ENCODE measurements at regions of chr14 and their contacts with region 1.

Region 1: GRCh38 chr14:23320774-23321571 is at the start of gene PABPN1:
- DNase-seq: peak; percentile 99 to 100
- H3K4me3 ChIP-seq: peak within 1 kb of the TSS; percentile 81 to 99
- H3K27ac ChIP-seq: peak within 1 kb of the TSS; percentile 89 to 100
- H3K4me1 ChIP-seq: peaks cover 0 to 25% (median 15%) of the 10 kb centered on the region in 4 donors
- H3K27me3 ChIP-seq: no peaks in the 10 kb centered on the region
- CTCF ChIP-seq: peak in 1 of 2 experiments; percentile 20

Region 2: DNA sequence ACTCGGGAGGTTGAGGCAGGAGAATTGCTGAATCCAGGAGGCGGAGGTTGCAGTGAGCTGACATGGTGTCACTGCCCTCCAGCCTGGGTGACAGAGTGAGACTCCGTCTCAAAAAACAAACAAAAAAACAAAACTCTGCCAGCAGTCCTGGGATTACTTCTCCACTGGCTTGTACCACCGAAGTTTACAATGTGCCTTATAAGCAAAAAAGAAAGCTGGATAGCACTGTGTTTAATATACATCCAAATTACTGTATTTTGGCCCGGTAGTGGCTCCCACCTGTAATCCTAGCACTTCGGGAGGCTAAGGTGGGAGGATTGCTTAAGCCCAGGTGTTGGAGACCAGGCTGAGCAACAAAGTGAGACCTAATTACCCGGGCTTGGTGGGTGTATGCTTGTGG is 51.8 kb before region 1 on chr14:
- intact Hi-C with region 1: loop called (anchors 10 kb)
- DNase-seq: no peak
- H3K4me3 ChIP-seq: no peak overlapping the region
- H3K27ac ChIP-seq: no peak overlapping the region
- H3K4me1 ChIP-seq: no peaks in the 10 kb centered on the region
- H3K27me3 ChIP-seq: no peaks in the 10 kb centered on the region
- CTCF ChIP-seq: no peak

Region 3: DNA sequence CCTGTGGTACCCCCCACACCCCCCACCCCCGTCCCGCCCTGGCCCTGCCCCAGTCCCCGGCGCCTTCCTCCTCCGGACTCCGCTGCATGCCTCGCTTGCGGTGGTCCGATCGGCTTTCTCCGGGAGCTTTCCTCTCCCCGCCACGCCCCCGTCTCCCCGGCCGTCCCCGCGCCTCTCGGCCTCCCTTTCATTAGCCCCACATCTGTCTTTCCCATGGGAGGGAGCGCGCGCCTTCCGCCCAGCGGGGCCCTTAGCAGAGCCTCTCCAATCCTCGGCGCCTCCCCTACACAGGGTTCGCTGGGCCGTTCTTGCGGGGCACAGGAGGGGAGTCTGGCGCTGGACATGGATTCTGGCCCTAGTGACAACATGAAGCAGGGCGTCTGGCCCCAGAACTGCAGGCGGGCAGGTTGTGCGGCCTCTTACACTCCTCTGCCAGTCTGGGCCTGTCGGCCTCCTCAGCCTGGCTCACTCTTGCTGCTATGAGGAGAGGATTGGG is 45.5 kb after region 1 on chr14:
- intact Hi-C with region 1: loop called (anchors 5 kb)
- DNase-seq: peak; percentile 76 to 92
- H3K4me3 ChIP-seq: peak overlapping the region; percentile 70 to 71
- H3K27ac ChIP-seq: peak overlapping the region; percentile 98 to 100
- H3K4me1 ChIP-seq: peaks cover 0 to 48% (median 21%) of the 10 kb centered on the region in 4 donors
- H3K27me3 ChIP-seq: no peaks in the 10 kb centered on the region
- CTCF ChIP-seq: no peak

Region 4: DNA sequence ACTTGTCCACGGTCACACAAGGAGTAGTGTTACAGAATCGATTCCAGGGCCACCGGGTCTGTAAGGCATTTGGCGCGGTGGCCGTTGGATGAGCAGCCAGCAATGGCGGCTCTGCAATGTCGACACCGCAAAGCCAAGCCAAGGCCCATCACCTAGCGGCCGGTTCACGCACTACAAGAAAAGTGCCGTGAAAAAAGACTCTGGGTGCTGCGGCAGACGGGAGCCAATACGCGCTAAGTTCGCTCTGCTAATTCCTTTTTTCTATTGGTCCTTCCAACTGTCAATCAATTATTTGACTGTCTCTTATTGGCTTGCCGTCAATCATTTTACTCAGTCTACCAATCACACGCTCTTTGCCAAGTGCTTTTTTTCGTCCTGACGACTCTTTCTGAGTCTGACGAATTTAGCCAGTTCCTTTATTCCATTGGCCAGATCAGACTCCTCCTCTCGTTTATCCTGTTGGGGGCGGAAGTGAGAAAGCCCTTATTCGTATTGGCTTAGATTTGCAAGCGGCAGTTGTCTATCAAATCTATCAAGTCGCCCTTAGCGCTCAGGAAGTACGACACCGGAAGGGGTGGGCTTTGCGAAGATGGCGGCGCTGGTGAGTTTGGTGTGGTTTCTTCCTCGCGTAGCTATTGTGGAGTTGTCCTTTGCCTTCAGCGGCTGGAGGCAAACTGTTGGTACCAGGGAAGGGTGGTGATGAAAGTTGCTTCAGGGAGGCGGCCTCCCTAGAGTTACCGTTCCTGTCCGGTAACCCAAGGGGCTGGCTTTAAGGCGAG is 148.3 kb after region 1 on chr14 and contains the start of gene NGDN:
- intact Hi-C with region 1: loop called (anchors 10 kb)
- DNase-seq: peak; percentile 96
- H3K4me3 ChIP-seq: peak within 1 kb of the TSS; percentile 76 to 79
- H3K27ac ChIP-seq: peak within 1 kb of the TSS; percentile 76 to 83
- H3K4me1 ChIP-seq: peaks cover 0 to 8% (median 4%) of the 10 kb centered on the region in 4 donors
- H3K27me3 ChIP-seq: no peaks in the 10 kb centered on the region
- CTCF ChIP-seq: peak; percentile 72 to 87

Region 5: DNA sequence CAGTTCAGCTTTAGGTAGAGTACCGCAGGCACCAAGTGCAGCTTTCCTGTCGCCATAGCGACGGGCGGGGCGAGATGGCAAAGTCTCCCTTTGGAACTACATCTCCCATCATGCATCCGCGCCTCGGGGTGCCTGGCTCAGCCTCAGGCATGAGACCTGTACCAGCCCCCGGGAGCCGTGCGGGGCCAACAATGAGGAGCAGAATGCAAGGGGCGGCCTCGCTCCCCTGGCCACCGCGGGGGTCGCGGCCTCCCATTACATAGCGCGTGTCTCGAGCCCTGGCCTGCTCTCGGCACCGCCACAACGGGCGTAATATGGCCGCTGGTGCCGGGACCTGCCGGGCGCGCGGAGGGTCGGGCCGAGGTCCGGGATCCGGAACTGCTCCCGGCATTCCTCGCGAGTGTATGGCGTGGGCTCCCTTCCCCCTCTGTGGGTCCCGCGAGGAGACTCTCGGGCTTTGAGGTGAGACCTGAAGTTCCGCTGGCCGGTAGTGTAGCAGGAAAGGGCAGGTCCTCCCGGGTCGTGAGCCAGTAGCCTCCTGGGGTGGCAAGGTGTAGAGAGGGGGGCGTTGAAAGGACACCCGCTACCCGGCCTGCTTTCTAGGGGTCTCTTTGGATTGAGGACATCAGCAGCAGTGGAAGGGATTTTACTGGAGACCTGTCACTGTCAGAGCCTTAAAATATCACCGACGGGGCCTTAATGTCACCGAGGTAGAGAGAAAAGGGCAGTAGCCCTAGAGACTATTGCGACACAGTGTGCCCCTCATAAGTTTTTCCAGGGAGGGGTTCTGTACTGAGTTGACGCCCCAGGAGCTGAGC is 235.1 kb after region 1 on chr14 and contains the start of gene THTPA:
- intact Hi-C with region 1: loop called (anchors 10 kb)
- DNase-seq: peak; percentile 93 to 94
- H3K4me3 ChIP-seq: peak within 1 kb of the TSS; percentile 79 to 83
- H3K27ac ChIP-seq: peak within 1 kb of the TSS; percentile 93 to 95
- H3K4me1 ChIP-seq: peaks cover 0 to 38% (median 24%) of the 10 kb centered on the region in 4 donors
- H3K27me3 ChIP-seq: no peaks in the 10 kb centered on the region
- CTCF ChIP-seq: no peak